ENCODE measurements at regions of chr6 and their contacts with region 1.

Region 1: DNA sequence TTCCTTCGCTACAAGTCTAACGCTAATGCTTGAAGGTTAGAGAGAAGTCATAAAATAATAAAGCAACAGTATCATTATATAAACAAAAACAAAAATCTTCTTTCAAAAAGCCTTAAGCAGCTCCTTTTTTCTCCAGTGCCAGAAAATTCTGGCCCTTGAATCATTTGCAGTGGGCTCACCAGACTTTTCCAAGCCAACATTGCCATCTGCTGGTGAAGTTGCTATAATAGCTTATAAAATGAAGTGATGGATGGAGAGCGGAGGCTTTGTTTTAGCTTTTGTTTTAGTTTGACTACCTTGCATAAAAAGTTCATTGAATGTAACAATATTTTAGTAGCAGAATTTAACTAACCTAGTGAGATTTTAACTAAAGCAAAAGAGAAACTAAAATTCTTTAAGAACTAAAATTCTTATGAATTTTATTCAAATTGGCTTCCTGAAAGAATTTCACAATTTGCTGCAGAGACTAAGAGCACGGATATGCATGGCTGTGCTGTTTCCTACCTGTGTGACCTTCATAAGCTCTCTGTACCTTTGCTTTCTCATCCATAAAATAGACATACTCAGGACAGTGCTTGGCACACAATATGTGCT is 44.8 kb upstream of the SLC2A12 start:
- DNase-seq: no peak
- ATAC-seq: peak; percentile 64

Region 2: GRCh38 chr6:133187657-133188453 is 909.4 kb before region 1 on chr6:
- intact Hi-C with region 1: no loop called
- DNase-seq: no peak
- ATAC-seq: no peak

Region 3: GRCh38 chr6:133577851-133578250 is 519.4 kb before region 1 on chr6:
- intact Hi-C with region 1: loop called (anchors 10 kb)
- DNase-seq: no peak
- ATAC-seq: no peak

Region 4: DNA sequence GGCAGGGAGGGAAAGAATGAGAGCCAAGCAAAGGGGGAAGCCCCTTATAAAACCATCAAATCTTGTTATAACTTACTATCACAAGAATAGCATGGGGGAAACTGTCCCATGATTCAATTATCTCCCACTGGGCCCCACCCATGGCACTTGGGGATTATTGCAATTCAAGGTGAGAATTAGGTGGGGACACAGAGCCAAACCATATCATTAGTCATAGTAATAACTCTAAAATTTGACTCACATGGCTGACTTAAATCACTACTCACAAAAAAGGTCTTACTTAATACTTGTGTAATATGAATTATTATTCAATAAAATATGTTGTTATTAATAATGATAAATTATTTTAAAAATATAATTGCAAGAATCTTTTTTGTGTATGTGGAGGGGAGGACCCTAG is 386.4 kb before region 1 on chr6:
- intact Hi-C with region 1: no loop called
- DNase-seq: no peak
- ATAC-seq: no peak

Region 5: DNA sequence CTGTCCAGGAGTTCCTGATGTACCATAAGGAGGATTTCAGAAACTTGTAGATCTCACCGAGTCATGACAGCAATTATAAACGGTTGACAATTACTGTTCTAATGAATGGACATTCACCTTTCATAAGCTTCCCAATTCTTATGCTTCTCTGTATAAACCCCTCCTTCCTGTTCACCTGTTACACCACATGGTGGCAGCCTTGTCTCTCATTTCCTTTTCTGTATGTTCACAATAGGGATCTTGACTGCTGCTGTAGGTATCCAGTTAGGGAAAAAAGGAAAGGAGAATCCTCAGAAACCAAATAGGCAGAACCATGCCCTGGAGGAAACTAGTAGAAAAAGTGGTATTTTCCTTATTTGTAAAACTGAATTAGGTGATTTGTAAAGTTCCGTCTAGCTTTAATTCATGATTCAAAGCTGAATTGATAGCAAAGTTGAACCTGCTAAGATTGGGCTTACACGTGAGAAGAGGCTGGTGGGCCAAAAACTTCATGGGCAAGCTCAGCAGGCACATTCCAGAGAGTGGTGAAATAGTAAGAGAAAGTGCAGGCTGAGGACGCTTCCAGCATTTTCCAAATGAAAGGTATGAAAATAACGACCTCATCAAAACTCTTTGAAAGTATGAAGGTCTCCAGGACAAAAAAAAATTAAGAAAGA is 173.1 kb before region 1 on chr6:
- intact Hi-C with region 1: loop called (anchors 2 kb)
- DNase-seq: no peak
- ATAC-seq: peak; percentile 93

Region 6: DNA sequence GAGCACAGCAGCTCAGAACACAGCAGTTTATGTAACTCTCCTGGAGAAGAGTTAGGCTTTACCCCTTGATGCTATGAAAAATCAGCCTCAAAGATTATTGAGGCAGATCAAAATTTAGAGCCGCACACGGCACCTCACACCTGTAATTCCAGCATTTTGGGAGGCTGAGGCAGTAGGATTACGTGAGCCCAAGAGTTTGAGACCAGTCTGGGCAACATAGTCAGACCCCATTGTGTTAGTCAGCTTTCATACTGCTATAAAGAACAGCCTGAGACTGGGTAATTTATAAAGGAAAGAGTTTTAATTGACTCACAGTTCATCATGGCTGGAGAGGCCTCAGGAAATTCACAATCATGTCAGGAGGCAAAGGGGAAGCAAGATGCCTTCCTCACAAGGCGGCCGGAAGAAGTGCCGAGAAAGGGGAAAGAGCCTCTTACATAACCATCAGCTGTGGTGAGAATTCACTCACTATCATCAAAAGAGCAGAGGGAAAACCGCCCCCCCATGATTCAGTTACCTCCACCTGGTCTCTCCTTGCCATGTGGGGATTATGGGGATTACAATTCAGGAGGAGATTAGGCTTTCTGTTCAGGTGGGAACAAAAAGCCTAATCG is 133.0 kb after region 1 on chr6:
- intact Hi-C with region 1: no loop called
- DNase-seq: peak; percentile 60
- ATAC-seq: peak; percentile 43